HEK293T (cell line): ENCODE measurements at regions of chr7 and their contacts with region 1.

Region 1: DNA sequence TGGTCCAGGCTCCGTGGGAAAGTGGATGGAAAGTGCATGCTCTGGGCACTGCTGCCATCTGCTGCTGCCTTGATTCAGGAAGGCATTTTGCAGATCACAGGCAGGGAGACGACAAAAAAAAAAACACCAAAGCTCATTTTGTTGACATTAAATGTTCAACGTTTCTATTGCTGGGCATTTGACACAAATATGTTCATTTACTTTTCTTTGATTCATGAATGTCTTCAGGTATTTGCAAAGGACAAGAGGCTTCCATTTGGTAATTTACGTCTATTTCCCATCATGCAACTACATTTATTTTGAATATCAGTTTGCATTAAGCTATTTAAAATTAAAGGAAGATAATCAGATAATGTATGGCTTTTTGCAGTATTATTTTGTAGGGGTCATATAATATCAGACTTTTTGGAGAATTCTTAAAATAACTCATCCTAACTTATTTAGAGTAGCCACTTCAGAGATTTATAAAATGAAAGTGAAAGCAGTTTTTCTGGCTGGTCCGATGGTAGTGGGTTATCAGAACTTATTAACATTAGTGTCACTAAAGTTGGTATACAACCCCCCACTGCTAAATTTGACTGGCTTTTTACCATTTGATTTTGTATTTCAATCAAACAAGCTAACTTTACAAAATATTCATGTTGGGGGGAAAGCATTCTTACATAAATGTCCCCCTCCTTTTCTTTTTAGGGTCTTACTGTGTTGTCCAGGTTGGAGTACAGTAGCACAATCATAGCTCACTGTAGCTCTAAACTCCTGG is 65.3 kb downstream of the PDIA4 start:
- DNase-seq: peak; percentile 77

Region 2: GRCh38 chr7:148979827-148980226 is 16.8 kb after region 1 on chr7:
- CTCF ChIA-PET with region 1: interaction called, 14 read pairs
- POLR2A ChIA-PET with region 1: no interaction called
- DNase-seq: no peak

Region 3: DNA sequence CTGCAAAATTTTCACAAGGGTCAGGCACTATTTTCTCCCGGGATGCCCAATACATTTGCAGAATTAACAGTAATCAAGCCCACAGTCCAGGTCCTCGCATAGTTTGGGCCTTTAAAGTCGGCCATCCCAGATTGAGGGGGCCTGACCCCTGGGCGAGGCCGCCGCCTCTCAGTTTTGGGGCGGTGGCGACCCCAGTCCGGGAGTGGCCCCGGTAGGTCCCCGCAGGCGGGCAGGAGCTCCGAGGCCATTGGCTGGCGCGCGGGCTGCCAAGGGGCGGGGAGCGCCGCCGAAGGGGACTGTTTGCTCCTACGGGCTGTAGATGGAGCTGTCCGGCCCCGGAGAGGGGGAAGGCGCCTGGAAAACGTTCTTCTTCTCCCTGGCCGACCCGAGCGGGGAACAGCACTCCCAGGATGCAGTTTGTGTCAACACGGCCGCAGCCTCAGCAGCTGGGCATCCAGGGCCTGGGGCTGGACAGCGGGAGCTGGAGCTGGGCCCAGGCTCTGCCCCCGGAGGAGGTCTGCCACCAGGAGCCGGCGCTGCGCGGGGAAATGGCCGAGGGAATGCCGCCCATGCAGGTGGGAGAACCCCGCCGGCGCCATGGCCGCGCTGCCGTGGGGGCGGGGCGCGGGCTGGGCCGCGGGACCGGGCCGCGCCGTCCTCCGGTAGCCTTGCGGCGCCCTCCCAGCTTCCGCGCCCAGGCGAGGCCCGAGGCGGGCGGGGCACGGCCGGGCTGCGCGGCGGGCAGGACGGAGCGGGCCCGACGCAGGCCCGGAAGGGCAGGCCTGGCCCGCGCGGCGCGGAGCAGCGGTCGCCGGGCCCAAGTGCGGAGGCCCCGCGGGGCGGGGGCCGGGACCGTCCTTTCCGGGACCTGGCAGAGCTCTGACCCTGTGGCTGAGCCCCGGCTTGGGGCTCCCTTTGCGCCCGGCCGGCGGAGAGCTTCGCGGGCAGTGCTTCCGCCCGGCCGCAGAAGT is 232.5 kb after region 1 on chr7 and contains the start of gene ZNF282:
- CTCF ChIA-PET with region 1: no interaction called
- POLR2A ChIA-PET with region 1: no interaction called
- DNase-seq: peak; percentile 99